Mammary epithelial cell (primary cell): ENCODE measurements at regions of chr13 and their contacts with region 1.

Region 1: GRCh38 chr13:30739761-30740642 is 4.7 kb downstream of the ALOX5AP start:
- DNase-seq: peak; percentile 92
- H3K4me3 ChIP-seq: no peak overlapping the region
- H3K27ac ChIP-seq: peak overlapping the region; percentile 54
- H3K4me1 ChIP-seq: peaks cover 45% of the 10 kb centered on the region
- H3K27me3 ChIP-seq: no peaks in the 10 kb centered on the region
- CTCF ChIP-seq: no peak

Region 2: DNA sequence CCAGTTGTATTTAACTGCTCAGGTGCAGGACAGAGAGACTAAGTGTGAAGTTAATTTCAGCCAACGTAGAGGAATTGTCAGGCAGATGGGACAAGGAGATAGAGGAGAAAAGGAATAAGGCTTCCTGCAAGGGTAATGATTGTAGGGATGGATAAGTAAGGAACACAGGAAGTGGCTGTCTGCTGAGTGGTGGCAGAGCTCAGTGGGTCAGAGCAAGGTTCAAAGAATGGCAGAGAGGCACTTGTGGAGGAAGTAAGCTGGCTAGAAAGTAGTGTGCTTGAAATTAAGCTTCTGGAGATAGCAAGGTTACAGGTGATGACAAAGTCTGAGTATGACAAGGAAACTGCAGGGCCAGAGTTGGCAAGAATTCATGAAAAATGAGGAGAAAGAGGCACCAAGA is 74.4 kb before region 1 on chr13:
- CTCF ChIA-PET with region 1: no interaction called
- dilution Hi-C with region 1: loop called (anchors 5 kb)
- in situ Hi-C with region 1: no loop called
- intact Hi-C with region 1: no loop called
- DNase-seq: no peak
- H3K4me3 ChIP-seq: no peak overlapping the region
- H3K27ac ChIP-seq: no peak overlapping the region
- H3K4me1 ChIP-seq: no peaks in the 10 kb centered on the region
- H3K27me3 ChIP-seq: no peaks in the 10 kb centered on the region
- CTCF ChIP-seq: no peak

Region 3: GRCh38 chr13:30673669-30674521 is 66.1 kb before region 1 on chr13:
- CTCF ChIA-PET with region 1: no interaction called
- dilution Hi-C with region 1: loop called (anchors 5 kb)
- in situ Hi-C with region 1: no loop called
- intact Hi-C with region 1: loop called (anchors 2 kb)
- DNase-seq: peak; percentile 81
- H3K4me3 ChIP-seq: peak overlapping the region; percentile 23 to 56 (median 52)
- H3K27ac ChIP-seq: no peak overlapping the region
- H3K4me1 ChIP-seq: peaks cover 9% of the 10 kb centered on the region
- H3K27me3 ChIP-seq: no peaks in the 10 kb centered on the region
- CTCF ChIP-seq: peak; percentile 37 to 49

Region 4: DNA sequence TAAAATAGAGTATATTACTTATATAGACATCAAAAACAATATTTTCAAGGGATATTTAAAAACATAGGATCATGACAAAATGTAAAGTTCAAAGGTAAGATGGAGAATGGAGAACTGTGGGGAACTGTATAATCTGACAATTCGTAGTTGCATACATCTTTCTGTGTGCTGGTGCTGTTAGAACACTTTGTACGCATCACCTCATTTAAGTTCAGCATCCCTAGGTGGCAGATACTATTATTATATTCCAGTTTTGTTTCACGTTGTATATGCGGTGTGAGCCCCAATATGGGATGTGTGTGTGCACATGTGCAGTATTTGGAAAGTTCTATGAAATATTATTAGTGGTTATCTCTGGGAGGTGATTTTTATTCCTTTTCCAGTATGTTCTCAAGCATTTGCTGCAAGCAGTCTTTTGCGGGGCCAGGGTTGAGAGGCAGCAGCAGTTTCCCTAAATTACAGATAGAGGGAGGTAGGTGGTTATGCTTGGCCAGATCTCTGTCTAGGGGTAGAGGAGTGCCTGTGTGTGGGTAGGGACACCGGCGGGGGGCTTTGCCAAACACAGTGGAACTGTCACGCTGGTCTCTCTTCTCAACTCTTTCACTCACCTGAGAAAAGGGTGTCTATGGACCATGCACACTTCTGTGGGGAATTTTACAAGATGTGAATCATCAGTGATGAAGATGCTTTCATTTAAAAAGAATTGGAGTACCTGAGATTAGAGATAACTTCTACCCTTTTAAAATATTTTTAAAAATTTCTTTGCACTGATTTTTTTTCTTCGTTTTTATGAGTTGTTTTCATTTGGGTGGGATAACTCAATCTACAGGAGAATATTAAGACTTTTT is 60.3 kb before region 1 on chr13:
- CTCF ChIA-PET with region 1: no interaction called
- dilution Hi-C with region 1: no loop called
- in situ Hi-C with region 1: no loop called
- intact Hi-C with region 1: loop called (anchors 2 kb)
- DNase-seq: no peak
- H3K4me3 ChIP-seq: no peak overlapping the region
- H3K27ac ChIP-seq: no peak overlapping the region
- H3K4me1 ChIP-seq: no peaks in the 10 kb centered on the region
- H3K27me3 ChIP-seq: no peaks in the 10 kb centered on the region
- CTCF ChIP-seq: peak; percentile 47 to 78